ENCODE measurements at regions of chr2 and their contacts with region 1.

Region 1: DNA sequence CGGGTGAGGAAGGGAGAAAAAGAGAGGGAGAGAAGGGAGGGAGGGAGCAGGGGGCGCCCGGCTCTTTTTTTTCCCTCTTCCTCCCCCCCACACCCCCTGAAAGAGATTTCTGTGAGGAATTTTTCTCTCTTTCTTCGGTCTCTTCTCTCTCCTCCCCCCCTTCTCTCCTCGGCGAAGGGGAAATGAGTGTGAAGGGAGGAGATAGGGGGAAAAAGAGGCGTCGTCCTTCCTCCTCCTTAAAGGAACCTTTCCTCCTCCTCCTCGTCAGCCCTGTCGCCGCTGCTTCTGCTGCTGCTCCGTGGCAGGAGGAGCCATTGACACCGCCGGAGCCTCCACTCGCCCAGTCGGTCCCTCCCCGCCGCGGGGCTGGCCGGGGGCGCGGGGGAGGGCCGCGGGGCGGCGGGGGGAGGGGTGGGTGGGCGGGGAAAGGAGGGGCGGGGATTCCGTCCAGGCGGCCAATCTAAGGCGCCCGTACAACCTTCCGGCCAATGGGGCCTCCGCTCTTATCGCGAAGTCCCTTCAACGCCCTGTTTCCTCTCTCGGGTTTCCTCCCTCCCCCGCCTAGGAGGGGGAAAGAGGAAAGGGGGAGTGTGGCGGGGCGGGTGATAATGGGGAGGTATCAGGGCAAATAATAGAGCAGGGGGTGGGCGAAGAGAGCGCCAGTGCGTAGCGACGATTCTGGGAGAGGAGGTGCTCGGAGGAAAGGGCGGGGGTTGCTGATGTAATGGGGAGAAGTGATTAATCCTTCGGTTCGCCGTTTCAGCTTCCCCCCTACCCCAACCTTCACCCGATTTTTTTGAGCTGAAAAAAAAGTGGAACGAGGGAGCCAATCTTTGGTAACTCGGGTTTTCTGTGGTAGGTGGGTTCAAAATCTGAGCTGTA is at the start of gene FBXO11:
- DNase-seq: peak; percentile 99
- H3K4me3 ChIP-seq: peak within 1 kb of the TSS; percentile 80 to 97 (median 94)
- H3K27ac ChIP-seq: peak within 1 kb of the TSS; percentile 92 to 100 (median 99)
- H3K4me1 ChIP-seq: peaks cover 11 to 33% (median 31%) of the 10 kb centered on the region in 4 donors
- H3K27me3 ChIP-seq: no peaks in the 10 kb centered on the region
- CTCF ChIP-seq: peak; percentile 52 to 63 (median 53)
- EP300 ChIP-seq: no peak
- POLR2A ChIP-seq: peak; percentile 73
- total RNA-seq, gene FBXO11: 37.3 to 53.8 (median 47.0) TPM

Region 2: GRCh38 chr2:47782671-47783485 is 123.5 kb before region 1 on chr2 and contains the start of gene MSH6:
- intact Hi-C with region 1: loop called (anchors 5 kb)
- DNase-seq: peak; percentile 96
- H3K4me3 ChIP-seq: peak within 1 kb of the TSS; percentile 77 to 99 (median 84)
- H3K27ac ChIP-seq: peak within 1 kb of the TSS; percentile 92 to 99 (median 94)
- H3K4me1 ChIP-seq: peaks cover 12 to 38% (median 31%) of the 10 kb centered on the region in 4 donors
- H3K27me3 ChIP-seq: no peaks in the 10 kb centered on the region
- CTCF ChIP-seq: peak in 1 of 3 experiments; percentile 17
- EP300 ChIP-seq: no peak
- POLR2A ChIP-seq: peak; percentile 67
- total RNA-seq, gene MSH6: 28.2 to 47.0 (median 39.6) TPM

Region 3: DNA sequence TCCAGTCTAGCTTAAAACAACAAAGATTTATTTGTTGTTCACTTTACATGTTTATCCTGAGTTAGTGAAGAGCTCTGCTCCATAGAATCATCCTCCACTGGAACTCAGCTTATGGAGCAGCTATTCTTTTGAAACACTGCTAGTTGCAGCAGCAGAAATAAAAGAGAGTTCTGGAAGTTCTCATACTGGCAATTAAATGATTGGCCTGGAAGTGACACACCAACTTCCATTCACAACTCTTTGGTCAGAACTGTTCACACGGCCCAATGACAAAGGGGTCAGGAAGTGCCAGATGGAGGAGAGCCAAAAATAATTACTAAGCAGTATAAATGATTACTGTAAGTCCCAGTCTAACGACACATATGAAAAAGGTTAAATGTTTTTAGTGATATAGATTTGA is 39.2 kb before region 1 on chr2:
- intact Hi-C with region 1: loop called (anchors 5 kb)
- DNase-seq: no peak
- H3K4me3 ChIP-seq: no peak overlapping the region
- H3K27ac ChIP-seq: peak overlapping the region; percentile 17 to 57 (median 32)
- H3K4me1 ChIP-seq: peaks cover 50 to 76% (median 69%) of the 10 kb centered on the region in 4 donors
- H3K27me3 ChIP-seq: no peaks in the 10 kb centered on the region
- CTCF ChIP-seq: no peak
- EP300 ChIP-seq: no peak
- POLR2A ChIP-seq: no peak

Region 4: DNA sequence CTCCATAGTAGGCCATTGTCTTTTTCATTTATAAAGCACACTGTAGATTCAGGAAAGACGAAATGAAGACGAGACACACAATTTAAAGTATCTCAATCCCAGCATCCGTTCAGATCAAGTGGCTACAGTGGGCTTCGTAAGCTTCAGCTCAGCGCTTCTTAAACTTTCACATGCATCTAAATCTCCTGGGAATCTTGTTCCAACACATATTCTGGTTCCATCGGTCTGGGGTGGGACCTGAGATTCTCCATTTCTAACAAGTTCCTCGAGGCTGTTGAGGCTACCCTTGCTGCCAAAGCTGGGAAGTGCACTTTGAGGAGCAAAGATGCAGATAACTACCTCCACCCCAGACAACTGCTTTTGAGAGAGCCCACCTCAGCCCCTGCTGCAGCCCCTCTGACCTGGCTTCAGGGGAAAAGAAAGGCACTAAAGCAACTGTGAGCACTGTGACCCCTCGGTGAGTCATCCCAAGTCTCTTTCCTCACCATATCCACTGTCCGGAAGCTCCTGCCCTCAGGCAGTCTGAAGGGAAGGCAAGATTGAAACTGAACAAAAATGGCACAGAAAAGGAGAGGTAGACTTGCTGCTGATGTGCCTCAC is 201.0 kb after region 1 on chr2:
- intact Hi-C with region 1: loop called (anchors 5 kb)
- DNase-seq: no peak
- H3K4me3 ChIP-seq: no peak overlapping the region
- H3K27ac ChIP-seq: peak overlapping the region in 2 of 4 donors; percentile 29 to 75
- H3K4me1 ChIP-seq: peaks cover 18 to 31% (median 22%) of the 10 kb centered on the region in 4 donors
- H3K27me3 ChIP-seq: no peaks in the 10 kb centered on the region
- CTCF ChIP-seq: peak in 1 of 3 experiments; percentile 4
- EP300 ChIP-seq: no peak
- POLR2A ChIP-seq: no peak

Region 5: DNA sequence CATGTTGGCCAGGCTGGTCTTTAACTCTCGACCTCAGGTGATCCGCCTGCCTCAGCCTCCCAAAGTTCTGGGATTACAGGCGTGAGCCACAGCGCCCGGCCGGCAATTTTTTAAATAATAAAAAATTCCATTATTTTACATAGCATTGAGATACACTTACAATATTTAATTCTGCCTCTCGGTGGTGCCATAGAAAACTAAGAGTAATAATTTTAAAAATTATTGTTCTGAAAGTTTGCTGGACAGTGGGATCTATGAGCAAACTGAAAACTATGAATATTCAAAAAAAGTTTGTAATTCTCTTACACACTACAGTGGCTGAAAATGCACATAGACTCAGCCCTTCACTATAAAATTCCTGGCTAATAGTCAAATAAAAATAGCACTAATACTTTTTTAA is 532.7 kb after region 1 on chr2:
- intact Hi-C with region 1: loop called (anchors 5 kb)
- DNase-seq: no peak
- H3K4me3 ChIP-seq: no peak overlapping the region
- H3K27ac ChIP-seq: no peak overlapping the region
- H3K4me1 ChIP-seq: peaks cover 5 to 27% (median 25%) of the 10 kb centered on the region in 4 donors
- H3K27me3 ChIP-seq: no peaks in the 10 kb centered on the region
- CTCF ChIP-seq: no peak
- EP300 ChIP-seq: no peak
- POLR2A ChIP-seq: no peak